AG04450 (cell line): ENCODE measurements at regions of chr6 and their contacts with region 1.

Region 1: GRCh38 chr6:12011276-12012076 is 636 bp upstream of the HIVEP1 start:
- DNase-seq: peak; percentile 91
- H3K4me3 ChIP-seq: peak overlapping the region; percentile 83
- H3K27ac ChIP-seq: no peak overlapping the region
- H3K27me3 ChIP-seq: no peaks in the 10 kb centered on the region
- CTCF ChIP-seq: no peak

Region 2: DNA sequence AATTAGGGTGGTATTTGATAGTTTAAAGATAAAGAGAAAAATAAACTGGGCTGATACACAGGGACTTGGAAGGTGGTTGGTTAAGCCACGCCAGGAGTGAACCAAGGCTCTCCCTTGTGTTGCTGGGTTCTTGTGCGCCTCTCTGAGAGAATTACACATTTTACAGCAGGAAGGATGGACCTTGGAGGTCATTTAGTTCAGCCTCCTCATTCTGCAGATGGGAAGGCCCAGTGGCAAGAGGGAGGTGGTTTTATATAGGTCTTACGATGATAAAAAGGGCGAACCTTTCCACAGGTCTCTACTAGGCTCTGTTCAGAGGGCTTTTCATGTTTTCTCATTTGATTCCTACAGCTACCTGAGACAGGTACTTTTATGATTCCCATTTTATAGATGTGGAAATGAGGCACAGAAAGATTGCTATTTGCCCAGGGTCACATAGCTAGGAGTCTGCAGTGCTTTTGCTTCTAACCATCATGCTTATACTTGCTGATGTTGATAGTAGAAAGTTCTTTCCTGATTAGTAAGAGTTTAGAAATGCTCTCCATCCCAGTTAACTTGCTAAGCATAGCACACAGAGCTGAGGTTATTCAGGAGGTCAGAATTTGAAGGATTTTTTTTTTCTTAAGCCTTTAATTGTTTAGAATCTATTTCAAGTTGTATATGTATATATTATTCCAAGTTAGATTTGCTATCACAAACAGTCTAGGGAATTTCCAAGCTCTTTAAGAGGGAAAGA is 13.4 kb after region 1 on chr6:
- CTCF ChIA-PET with region 1: no interaction called
- POLR2A ChIA-PET with region 1: interaction called, 22 read pairs
- DNase-seq: peak; percentile 84
- H3K4me3 ChIP-seq: no peak overlapping the region
- H3K27ac ChIP-seq: peak overlapping the region; percentile 88
- H3K27me3 ChIP-seq: no peaks in the 10 kb centered on the region
- CTCF ChIP-seq: no peak